Body of pancreas (tissue), 4 donors: ENCODE measurements at regions of chr16 and their contacts with region 1.

Region 1: DNA sequence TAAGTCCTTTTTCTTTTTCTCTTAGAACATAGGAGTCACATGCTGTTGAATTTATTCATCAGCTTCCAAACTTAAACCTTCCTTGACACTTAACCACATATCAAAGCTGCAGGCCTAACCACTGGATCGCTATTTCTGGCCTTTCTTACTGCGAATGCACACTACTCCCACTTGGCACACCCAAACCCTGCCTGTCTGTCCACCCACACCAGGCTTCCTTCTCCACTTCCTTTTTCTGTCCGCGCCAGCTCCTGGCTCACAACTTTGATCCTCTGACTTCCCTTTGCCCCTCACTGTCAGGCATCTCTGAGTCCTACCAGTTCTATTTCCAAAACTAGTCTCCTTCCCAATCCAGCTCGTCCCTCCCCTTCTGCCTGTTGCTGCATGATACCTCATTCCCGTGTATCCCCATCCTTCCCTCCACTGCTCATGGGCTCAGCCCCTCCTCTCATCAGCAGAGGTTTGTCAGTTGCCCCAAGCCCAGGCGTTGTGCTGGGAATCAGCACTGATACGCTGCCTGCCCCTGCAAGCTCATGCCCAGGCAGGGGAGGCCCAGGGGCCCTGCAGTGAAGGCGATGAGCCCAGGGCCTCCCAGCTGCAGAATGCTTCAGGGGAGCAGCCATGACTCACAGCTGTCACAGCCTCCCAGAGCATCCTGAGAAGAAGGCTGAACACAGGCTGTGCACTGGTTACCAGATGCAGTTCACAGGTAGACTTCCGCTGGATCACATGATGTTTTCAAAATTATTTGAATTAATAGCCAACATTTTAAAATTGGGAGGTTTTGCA is 179.8 kb downstream of the KATNIP start:
- DNase-seq: peak in 1 of 4 donors; percentile 35
- ATAC-seq: no peak
- H3K4me3 ChIP-seq: no peak overlapping the region
- H3K27ac ChIP-seq: no peak overlapping the region
- H3K4me1 ChIP-seq: no peaks in the 10 kb centered on the region
- H3K27me3 ChIP-seq: no peaks in the 10 kb centered on the region
- CTCF ChIP-seq: no peak
- POLR2A ChIP-seq: no peak

Region 2: DNA sequence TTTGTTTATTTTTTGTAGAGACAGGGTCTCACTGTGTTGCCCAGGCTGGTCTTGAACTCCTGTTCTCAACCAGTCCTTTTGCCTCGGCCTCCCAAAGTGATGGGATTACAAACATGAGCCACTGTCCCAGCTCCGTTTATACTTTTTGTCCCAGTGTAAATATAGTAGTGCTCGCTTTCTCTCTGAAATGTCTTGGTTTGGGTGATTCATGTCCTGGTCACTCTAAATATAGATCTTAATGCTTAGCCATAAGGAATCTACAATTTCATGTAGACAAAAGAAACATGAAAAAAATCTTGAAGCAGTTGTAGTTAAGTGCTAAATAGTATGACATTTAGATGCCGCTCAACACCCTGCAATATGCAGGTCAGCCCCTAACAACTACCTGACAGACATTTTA is 52.9 kb before region 1 on chr16:
- intact Hi-C with region 1: loop called (anchors 10 kb)
- DNase-seq: no peak
- ATAC-seq: no peak
- H3K4me3 ChIP-seq: no peak overlapping the region
- H3K27ac ChIP-seq: no peak overlapping the region
- H3K4me1 ChIP-seq: no peaks in the 10 kb centered on the region
- H3K27me3 ChIP-seq: no peaks in the 10 kb centered on the region
- CTCF ChIP-seq: no peak
- POLR2A ChIP-seq: no peak